ENCODE measurements at regions of chr6 and their contacts with region 1.

Region 1: GRCh38 chr6:52664186-52664990 is 6.5 kb upstream of the TMEM14A start:
- DNase-seq: peak; percentile 97
- H3K4me3 ChIP-seq: peak overlapping the region; percentile 61 to 76 (median 66)
- H3K27ac ChIP-seq: peak overlapping the region; percentile 69 to 83 (median 78)
- H3K4me1 ChIP-seq: peaks cover 0 to 17% (median 6%) of the 10 kb centered on the region in 4 donors
- H3K27me3 ChIP-seq: no peaks in the 10 kb centered on the region
- CTCF ChIP-seq: no peak
- EP300 ChIP-seq: no peak
- POLR2A ChIP-seq: peak in 1 of 2 donors; percentile 75

Region 2: GRCh38 chr6:52284460-52285176 is 379.8 kb before region 1 on chr6 and contains the start of gene MCM3:
- intact Hi-C with region 1: loop called (anchors 1 kb)
- DNase-seq: peak; percentile 99
- H3K4me3 ChIP-seq: peak within 1 kb of the TSS; percentile 62 to 88 (median 69)
- H3K27ac ChIP-seq: peak within 1 kb of the TSS; percentile 70 to 76 (median 75)
- H3K4me1 ChIP-seq: peaks cover 0 to 17% (median 12%) of the 10 kb centered on the region in 4 donors
- H3K27me3 ChIP-seq: no peaks in the 10 kb centered on the region
- CTCF ChIP-seq: no peak
- EP300 ChIP-seq: no peak
- POLR2A ChIP-seq: no peak
- total RNA-seq, gene MCM3: 31.0 to 36.8 (median 32.8) TPM

Region 3: DNA sequence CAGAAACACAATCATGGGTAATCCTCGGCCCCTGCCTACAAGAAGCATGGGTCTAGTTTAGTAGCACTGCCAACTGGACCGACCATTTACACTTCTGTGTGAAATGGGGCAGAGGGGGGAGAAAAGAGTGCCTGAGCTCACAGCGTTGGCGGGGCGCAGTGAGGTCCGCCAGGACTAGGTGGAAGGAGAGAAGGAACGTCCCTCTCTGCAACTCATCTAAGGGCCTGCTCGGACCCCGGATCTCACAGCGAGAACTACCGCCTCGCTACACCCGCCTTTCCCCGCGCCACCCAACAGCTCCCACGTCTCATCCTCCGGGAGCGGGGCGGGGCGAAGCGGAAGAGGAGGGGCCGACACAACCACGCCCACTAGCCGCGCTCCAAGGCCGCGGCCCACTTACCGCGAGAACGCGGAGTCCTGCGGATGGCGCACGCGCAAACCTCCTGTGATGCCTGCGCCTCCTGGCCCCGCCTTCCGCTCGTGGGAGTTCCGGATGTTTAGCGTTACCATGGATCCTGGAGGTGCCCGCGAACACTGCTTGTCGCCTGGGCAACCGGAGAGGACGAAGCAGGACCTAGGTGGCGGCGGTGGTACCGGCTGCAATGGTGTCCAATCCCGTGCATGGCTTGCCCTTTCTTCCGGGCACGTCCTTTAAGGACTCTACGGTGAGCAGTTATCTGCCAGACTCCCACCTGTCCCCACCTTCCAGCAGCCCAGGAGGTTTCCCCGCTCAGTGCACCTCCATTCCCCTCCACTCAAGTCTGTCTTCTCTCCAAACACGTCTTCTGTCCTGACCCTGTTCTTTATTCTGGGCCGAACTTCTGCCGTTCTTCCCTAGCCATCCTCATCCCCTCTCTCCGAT is 244.3 kb before region 1 on chr6 and contains the start of gene EFHC1:
- intact Hi-C with region 1: loop called (anchors 1 kb)
- DNase-seq: peak; percentile 99
- H3K4me3 ChIP-seq: peak within 1 kb of the TSS; percentile 61 to 97 (median 88)
- H3K27ac ChIP-seq: peak within 1 kb of the TSS; percentile 76 to 88 (median 85)
- H3K4me1 ChIP-seq: peaks cover 0 to 24% (median 14%) of the 10 kb centered on the region in 4 donors
- H3K27me3 ChIP-seq: no peaks in the 10 kb centered on the region
- CTCF ChIP-seq: no peak
- EP300 ChIP-seq: peak in 1 of 4 donors; percentile 34
- POLR2A ChIP-seq: peak; percentile 48 to 60
- total RNA-seq, gene EFHC1: 15.9 to 38.5 (median 19.1) TPM

Region 4: GRCh38 chr6:52512199-52512598 is 152.2 kb before region 1 on chr6:
- intact Hi-C with region 1: loop called (anchors 5 kb)
- DNase-seq: peak; percentile 89
- H3K4me3 ChIP-seq: no peak overlapping the region
- H3K27ac ChIP-seq: peak overlapping the region; percentile 78 to 93 (median 88)
- H3K4me1 ChIP-seq: peaks cover 0 to 60% (median 55%) of the 10 kb centered on the region in 4 donors
- H3K27me3 ChIP-seq: no peaks in the 10 kb centered on the region
- CTCF ChIP-seq: no peak
- EP300 ChIP-seq: no peak
- POLR2A ChIP-seq: no peak

Region 5: GRCh38 chr6:52598123-52598823 is 66.1 kb before region 1 on chr6:
- intact Hi-C with region 1: loop called (anchors 5 kb)
- DNase-seq: peak; percentile 84
- H3K4me3 ChIP-seq: peak overlapping the region in 3 of 4 donors; percentile 10 to 36 (median 34)
- H3K27ac ChIP-seq: peak overlapping the region in 3 of 4 donors; percentile 14 to 41 (median 30)
- H3K4me1 ChIP-seq: peaks cover 0 to 40% (median 25%) of the 10 kb centered on the region in 4 donors
- H3K27me3 ChIP-seq: no peaks in the 10 kb centered on the region
- CTCF ChIP-seq: peak; percentile 71 to 79 (median 73)
- EP300 ChIP-seq: no peak
- POLR2A ChIP-seq: no peak

Measured in sigmoid colon (tissue), 7 donors.